Left ventricle myocardium superior (tissue), 1 donor: ENCODE measurements at regions of chr5 and their contacts with region 1.

Region 1: GRCh38 chr5:65481635-65482295 is at the start of gene ADAMTS6:
- DNase-seq: peak; percentile 92
- ATAC-seq: peak; percentile 95
- total RNA-seq, gene ADAMTS6: 1.4 TPM

Region 2: DNA sequence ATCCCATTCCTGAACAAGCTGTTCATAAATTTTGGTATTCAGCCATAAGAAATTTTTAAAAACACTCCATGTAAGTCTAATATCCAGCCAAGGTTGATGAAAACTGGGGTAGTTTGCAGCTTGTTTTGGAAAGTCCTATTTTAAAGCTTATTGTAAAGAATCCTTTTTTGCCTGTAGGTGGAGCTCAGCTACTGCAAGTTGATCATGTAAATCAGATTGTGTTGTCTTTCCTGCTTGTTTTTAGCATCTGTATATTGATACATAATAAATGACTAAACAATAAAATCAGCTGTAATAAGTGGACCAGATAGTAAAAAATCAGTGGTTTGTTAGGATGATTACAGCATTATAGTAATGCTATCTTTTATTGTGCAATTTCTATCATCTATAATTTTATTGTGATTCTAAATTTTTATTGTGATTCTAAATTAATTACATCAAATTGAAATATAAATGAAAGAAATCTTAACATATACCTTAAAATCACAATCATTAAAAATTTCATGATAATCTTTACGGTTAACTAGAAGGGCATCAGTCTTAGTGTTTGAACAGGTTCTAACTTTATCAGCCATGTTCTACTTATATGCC is 670.6 kb before region 1 on chr5:
- intact Hi-C with region 1: loop called (anchors 5 kb)
- DNase-seq: no peak
- ATAC-seq: peak; percentile 41

Region 3: DNA sequence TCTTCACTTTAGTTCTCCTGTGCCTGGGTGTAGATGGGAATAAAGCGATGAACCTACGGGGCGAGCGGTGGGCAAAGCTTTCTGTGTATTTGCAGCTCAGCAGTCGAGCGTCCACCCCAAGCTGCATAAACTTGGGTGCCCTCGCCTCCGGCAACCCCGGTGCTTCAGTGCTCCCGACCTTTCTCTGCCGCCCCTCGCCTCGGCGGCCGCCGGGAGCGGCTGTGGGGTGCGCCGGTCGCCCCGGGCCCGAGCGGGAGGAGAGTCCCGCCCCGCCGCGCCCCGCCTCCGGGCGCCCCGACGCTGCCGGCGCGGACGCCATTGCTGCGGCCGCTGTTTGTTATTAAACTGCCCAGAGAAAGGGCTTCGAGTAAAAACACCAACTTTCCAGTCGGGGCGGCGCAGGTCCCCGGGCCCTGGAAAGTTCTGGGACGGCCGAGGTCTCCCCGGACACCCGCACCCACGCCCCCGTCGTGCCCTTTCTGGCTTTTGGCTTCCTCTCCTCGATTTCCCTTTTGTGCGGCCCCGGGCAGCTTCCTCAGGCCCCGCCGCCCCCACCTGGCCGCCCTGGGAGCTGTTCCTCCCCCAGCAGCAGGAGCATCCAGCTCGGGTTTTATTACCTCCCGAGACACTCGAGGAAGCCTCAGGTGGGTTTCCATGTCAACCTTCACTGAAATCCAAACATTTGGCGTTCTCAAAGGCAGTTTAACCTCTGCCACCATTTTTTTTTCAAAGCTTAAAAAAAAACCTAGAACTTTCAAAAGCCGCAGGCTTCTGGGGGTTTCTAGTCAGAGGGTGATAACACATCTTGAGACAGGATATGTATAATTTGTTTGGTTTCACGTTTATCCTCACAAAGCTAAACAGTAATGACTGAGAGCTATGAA is 378.7 kb before region 1 on chr5:
- intact Hi-C with region 1: loop called (anchors 5 kb)
- DNase-seq: peak; percentile 81
- ATAC-seq: peak; percentile 94